ENCODE measurements at regions of chr5 and their contacts with region 1.

Region 1: DNA sequence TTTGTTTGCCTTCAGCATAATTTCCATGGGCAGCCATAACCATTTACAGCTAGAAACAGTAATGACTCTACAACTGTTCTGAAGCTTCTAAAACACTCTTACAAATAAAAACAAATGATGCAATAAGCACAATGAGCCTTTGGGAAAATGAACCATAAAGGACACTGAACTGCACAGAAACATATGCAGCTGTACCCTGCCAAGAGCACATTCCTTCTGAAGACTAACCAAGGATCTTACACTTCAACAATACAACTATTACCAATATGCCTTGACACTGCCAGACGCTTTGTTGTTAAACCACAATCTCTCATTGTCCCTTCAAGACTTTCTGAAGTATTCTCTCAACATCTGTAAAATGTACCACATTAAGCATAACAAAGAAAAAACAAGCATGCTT is 104.2 kb upstream of the HMHB1 start:
- DNase-seq: no peak
- H3K4me3 ChIP-seq: no peak overlapping the region
- H3K27ac ChIP-seq: no peak overlapping the region
- H3K4me1 ChIP-seq: no peaks in the 10 kb centered on the region
- H3K27me3 ChIP-seq: no peaks in the 10 kb centered on the region
- CTCF ChIP-seq: no peak

Region 2: DNA sequence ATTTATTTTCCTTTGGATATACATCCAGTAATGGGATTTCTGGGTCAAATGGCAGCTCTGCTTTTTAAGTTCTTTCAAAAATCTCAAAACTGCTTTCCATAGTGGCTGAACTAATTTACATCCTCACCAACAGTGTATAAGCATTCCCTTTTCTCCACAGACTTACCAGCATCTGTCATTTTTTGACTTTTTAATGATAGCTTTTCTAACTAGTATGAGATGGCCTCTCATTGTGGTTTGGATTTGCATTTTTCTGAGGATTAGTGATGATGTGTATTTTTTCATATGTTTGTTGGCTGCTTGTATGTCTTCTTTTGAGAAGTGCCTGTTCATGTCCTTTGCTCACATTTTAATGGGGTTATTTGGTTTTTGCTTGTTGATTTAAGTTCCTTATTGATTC is 14.1 kb after region 1 on chr5:
- CTCF ChIA-PET with region 1: interaction called, 12 read pairs
- POLR2A ChIA-PET with region 1: no interaction called
- intact Hi-C with region 1: no loop called
- DNase-seq: peak; percentile 36
- H3K4me3 ChIP-seq: no peak overlapping the region
- H3K27ac ChIP-seq: no peak overlapping the region
- H3K4me1 ChIP-seq: peaks cover 5% of the 10 kb centered on the region
- H3K27me3 ChIP-seq: no peaks in the 10 kb centered on the region
- CTCF ChIP-seq: no peak

Region 3: GRCh38 chr5:144004146-144004545 is 296.3 kb after region 1 on chr5:
- CTCF ChIA-PET with region 1: no interaction called
- POLR2A ChIA-PET with region 1: no interaction called
- intact Hi-C with region 1: no loop called
- DNase-seq: no peak
- H3K4me3 ChIP-seq: no peak overlapping the region
- H3K27ac ChIP-seq: no peak overlapping the region
- H3K4me1 ChIP-seq: no peaks in the 10 kb centered on the region
- H3K27me3 ChIP-seq: no peaks in the 10 kb centered on the region
- CTCF ChIP-seq: no peak